Astrocyte of the cerebellum (primary cell): ENCODE measurements at regions of chr3 and their contacts with region 1.

Region 1: GRCh38 chr3:38521391-38521987 is 25.3 kb downstream of the EXOG start:
- DNase-seq: peak; percentile 78
- H3K4me3 ChIP-seq: no peak overlapping the region
- CTCF ChIP-seq: peak; percentile 89

Region 2: GRCh38 chr3:38590521-38590920 is 69.0 kb after region 1 on chr3:
- in situ Hi-C with region 1: loop called (anchors 10 kb)
- DNase-seq: no peak
- H3K4me3 ChIP-seq: no peak overlapping the region
- CTCF ChIP-seq: no peak

Region 3: GRCh38 chr3:38843898-38844297 is 322.4 kb after region 1 on chr3:
- in situ Hi-C with region 1: loop called (anchors 25 kb)
- DNase-seq: peak; percentile 48
- H3K4me3 ChIP-seq: no peak overlapping the region
- CTCF ChIP-seq: peak; percentile 60